ENCODE measurements at regions of chr1 and their contacts with region 1.

Region 1: GRCh38 chr1:184386312-184387068 is at the start of gene C1orf21:
- DNase-seq: peak; percentile 95
- H3K4me3 ChIP-seq: peak within 1 kb of the TSS; percentile 81 to 96 (median 94)
- H3K27ac ChIP-seq: peak within 1 kb of the TSS; percentile 91 to 97 (median 92)
- H3K4me1 ChIP-seq: peaks cover 23 to 42% (median 38%) of the 10 kb centered on the region in 4 donors
- H3K27me3 ChIP-seq: no peaks in the 10 kb centered on the region
- CTCF ChIP-seq: no peak
- EP300 ChIP-seq: no peak
- POLR2A ChIP-seq: peak; percentile 87
- total RNA-seq, gene C1orf21: 39.5 to 91.7 (median 58.8) TPM

Region 2: GRCh38 chr1:184283999-184284398 is 102.5 kb before region 1 on chr1:
- intact Hi-C with region 1: no loop called
- DNase-seq: no peak
- H3K4me3 ChIP-seq: no peak overlapping the region
- H3K27ac ChIP-seq: peak overlapping the region; percentile 23 to 69 (median 60)
- H3K4me1 ChIP-seq: peaks cover 13 to 30% (median 27%) of the 10 kb centered on the region in 4 donors
- H3K27me3 ChIP-seq: no peaks in the 10 kb centered on the region
- CTCF ChIP-seq: no peak
- EP300 ChIP-seq: no peak
- POLR2A ChIP-seq: no peak

Region 3: DNA sequence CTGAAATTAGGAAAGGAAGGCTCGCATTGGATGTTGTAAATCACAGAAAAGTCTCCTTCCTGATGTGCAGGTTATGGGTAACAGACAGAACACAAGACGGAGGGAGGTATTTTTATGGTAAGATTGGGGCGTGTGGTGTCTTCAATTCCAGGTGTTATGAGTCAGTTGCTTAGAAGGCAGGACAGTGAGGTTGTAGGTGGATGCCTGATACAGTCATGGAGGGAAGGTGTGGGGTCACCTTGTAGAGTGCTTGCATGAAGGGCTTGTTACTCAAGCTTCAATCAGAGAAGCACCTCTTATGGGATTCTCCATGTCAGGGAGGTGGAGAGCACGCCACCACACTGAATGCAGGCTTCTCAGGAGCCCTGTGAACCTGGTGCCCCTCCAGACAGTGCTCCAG is 63.4 kb after region 1 on chr1:
- intact Hi-C with region 1: no loop called
- DNase-seq: no peak
- H3K4me3 ChIP-seq: no peak overlapping the region
- H3K27ac ChIP-seq: no peak overlapping the region
- H3K4me1 ChIP-seq: peaks cover 20 to 45% (median 40%) of the 10 kb centered on the region in 4 donors
- H3K27me3 ChIP-seq: no peaks in the 10 kb centered on the region
- CTCF ChIP-seq: no peak
- EP300 ChIP-seq: no peak
- POLR2A ChIP-seq: no peak

Region 4: DNA sequence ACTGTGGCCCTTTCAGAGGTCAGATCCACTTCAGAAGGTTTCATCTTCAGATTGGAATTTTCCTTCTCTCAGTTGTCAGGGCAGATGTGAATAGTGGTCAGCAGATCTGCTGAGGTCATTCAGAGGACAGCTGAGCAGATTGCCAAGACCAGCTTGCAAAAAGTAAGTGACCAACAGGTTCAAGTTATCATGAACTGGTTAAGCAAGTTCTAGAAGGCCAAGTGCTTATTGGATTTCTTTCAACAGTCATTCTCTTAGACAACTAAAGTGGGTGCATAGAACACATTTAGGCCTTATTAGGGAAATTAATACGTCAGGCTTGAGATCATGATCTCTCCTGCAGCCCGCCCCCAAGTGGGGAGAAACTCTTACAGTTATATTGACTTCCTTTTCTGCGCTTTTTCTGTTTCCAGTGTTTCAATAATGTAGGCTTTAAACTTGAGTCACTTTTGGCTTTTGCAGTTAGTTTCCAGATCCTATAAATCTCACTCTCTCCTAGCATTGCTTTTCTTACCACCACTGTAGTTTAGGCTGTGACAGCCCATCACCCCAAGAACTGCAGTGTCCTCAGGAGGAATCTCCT is 96.7 kb after region 1 on chr1:
- intact Hi-C with region 1: loop called (anchors 5 kb)
- DNase-seq: no peak
- H3K4me3 ChIP-seq: no peak overlapping the region
- H3K27ac ChIP-seq: peak overlapping the region; percentile 59 to 75 (median 66)
- H3K4me1 ChIP-seq: peaks cover 68 to 79% (median 76%) of the 10 kb centered on the region in 4 donors
- H3K27me3 ChIP-seq: no peaks in the 10 kb centered on the region
- CTCF ChIP-seq: peak in 2 of 3 experiments; percentile 15
- EP300 ChIP-seq: no peak
- POLR2A ChIP-seq: no peak

Region 5: DNA sequence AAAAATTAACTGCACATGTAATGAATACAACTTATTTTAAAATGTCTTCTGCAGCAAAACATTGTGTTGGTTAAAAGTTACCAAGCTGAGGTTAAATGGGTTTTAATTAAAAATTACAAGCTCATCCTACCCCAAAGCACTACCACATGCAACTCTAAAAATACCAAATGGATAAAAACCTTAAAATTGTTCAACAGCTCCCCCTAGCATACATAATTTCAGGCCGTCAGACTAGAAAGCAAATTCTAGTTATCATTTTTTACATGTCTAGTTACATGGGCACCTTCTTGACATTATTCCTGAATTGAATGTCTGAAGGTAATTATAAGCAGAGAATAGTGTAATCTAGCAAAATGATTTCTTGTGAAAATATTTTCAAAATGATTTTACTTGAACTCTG is 176.8 kb after region 1 on chr1:
- intact Hi-C with region 1: loop called (anchors 5 kb)
- DNase-seq: no peak
- H3K4me3 ChIP-seq: no peak overlapping the region
- H3K27ac ChIP-seq: peak overlapping the region in 1 of 4 donors; percentile 70
- H3K4me1 ChIP-seq: peaks cover 24 to 31% (median 29%) of the 10 kb centered on the region in 4 donors
- H3K27me3 ChIP-seq: no peaks in the 10 kb centered on the region
- CTCF ChIP-seq: peak; percentile 62 to 67 (median 63)
- EP300 ChIP-seq: no peak
- POLR2A ChIP-seq: no peak

Region 6: DNA sequence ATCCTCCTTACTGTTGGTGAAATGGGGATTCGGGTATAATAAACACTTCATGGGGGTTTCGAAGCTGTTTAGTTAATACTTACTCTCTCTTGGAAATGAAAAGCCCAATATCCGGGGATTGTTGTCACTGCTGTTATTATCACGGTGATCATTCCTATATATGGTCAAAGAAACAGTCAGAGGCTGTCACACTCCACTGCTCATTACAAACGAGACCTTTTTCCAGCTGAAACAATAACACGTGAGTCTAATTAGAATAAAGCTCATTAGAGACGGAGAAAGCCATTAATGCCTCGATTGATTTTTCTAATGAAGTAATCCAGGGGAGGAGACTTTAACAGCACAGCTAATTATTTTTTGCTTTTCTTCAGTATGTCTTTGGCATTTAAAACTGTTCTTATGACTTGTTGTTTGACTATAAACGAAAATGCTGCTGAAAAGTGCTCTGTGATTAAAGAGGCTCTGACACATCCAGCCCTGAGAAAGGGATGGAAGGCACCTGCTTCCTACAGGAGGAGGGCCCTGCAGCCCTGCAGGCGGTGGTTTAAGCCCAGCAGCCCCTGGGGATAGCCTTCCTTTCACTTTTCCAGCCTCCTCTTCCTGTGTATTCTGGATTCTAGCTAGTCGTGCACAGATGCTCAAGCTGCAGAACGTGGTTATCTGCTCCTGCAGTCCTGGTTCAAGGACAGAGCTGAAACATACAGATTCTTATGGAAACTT is 224.5 kb after region 1 on chr1:
- intact Hi-C with region 1: loop called (anchors 5 kb)
- DNase-seq: peak; percentile 29
- H3K4me3 ChIP-seq: peak overlapping the region; percentile 23 to 47 (median 41)
- H3K27ac ChIP-seq: peak overlapping the region; percentile 82 to 92 (median 84)
- H3K4me1 ChIP-seq: peaks cover 26 to 71% (median 58%) of the 10 kb centered on the region in 4 donors
- H3K27me3 ChIP-seq: no peaks in the 10 kb centered on the region
- CTCF ChIP-seq: no peak
- EP300 ChIP-seq: no peak
- POLR2A ChIP-seq: no peak

Measured in esophagus muscularis mucosa (tissue), 4 donors.